IMR-90 (cell line): ENCODE measurements at regions of chr2 and their contacts with region 1.

Region 1: DNA sequence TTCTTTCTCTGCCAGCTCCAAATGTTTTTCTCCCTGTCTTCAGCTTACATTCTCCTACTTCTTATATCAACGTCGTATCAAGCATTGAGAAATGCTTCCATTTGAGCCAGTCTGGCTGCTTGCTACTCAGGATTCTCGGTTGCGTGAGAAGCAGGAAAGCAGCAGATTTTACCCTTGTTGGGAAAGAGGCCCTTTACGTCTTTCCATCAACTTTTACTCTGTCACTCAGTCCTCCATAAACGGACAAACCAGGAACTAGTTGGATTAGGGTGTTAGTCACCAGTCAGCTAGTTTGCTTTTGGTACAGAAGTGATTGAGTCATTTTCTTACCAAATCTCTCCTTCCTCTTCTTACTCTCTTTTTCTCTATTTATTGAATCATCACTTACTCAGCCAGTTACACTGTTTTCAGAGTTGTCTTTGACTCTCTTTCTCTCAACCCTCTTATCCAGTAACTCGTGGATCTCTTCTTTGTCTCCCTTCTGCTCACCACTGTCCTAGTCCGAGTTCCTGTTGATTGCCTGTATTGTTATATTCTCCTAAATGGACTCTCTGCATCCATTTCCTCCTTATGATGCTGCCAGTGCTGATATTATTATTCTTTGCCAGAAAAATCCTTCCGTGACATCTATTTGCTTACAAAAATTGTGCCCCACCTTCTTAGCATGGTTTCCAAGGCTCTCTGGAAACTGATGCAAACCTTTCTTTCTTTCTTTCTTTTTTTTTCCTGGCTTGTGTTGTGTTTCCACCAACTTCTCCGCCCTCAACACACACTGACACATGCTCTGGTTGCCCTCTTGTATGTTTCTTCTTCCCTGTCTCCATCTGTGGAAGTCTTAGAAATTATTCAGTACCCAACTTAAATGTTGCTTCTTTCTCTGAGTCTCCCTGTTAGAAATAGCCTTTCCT is 61.5 kb downstream of the VRK2 start:
- DNase-seq: peak; percentile 97
- ATAC-seq: peak; percentile 90
- H3K4me3 ChIP-seq: peak overlapping the region; percentile 22; the same call in 1 of the 2 replicates
- H3K27ac ChIP-seq: peak overlapping the region; percentile 96
- H3K4me1 ChIP-seq: peaks cover 7% of the 10 kb centered on the region
- H3K27me3 ChIP-seq: no peaks in the 10 kb centered on the region
- CTCF ChIP-seq: no peak
- POLR2A ChIP-seq: no peak; the same call in 1 of the 2 replicates
- RAD21 ChIP-seq: no peak

Region 2: DNA sequence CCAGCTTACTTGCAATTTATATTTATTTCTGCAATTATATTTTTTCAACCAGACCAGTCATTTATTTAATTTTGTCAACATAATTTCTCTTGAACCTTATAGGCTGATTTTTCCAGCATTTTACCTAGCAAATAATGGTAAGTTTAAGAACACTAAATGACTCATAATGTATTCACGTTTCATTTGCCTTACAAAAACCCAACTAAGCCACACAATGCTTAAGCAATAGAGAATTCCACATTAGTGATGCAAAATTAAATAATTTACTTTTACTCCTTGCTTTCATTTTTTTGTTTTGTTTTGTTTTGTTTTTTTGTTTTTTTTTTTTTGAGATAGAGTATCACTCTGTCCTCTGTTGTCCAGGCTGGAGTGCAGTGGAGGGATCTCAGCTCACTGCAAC is 171.8 kb before region 1 on chr2:
- CTCF ChIA-PET with region 1: no interaction called
- POLR2A ChIA-PET with region 1: no interaction called
- dilution Hi-C with region 1: no loop called
- in situ Hi-C with region 1: no loop called
- intact Hi-C with region 1: loop called (anchors 5 kb)
- DNase-seq: peak; percentile 47
- ATAC-seq: peak; percentile 44; the same call in 1 of the 2 replicates
- H3K4me3 ChIP-seq: no peak overlapping the region
- H3K27ac ChIP-seq: no peak overlapping the region
- H3K4me1 ChIP-seq: no peaks in the 10 kb centered on the region
- H3K27me3 ChIP-seq: no peaks in the 10 kb centered on the region
- CTCF ChIP-seq: no peak
- POLR2A ChIP-seq: no peak
- RAD21 ChIP-seq: no peak

Region 3: DNA sequence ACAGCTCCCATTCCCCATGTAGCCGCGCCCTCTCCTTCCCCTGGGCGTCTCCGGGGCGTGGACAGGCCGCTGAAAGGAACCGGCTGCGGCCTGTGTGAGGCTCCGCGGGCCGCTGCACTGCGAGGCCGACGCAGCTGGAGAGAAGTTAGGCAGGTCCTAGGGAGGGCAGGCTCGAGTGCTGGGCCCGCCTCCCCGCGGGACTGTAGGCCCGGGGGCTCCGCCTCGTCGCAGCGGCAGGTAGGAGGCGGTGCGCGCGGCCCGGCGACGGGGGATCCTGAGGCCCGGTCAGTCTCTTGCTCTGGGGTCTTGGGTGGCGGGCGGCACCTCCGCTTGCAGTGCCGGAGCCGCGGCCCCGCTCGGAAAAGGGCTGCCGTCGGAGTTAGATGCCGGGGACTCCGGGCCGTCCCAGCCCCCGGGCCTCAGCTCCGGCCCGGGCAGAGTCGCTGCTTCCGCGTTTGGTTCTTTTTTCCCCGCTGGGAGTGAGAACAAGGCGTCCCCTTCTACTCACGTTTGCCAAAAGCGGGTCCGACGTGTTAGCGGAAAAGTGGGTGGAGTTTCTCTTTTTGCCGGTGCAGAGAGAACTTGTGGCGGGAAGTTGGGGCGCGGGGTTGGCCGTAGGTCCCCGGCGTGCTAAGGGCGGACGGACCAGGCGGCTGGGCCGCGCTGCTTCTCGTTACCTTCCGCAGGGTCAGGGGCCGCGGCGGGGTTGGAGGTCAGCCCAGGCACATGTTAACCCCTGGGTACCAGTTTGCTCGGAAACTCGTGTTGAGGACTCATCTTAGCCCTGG is 61.3 kb before region 1 on chr2 and contains the start of gene VRK2:
- CTCF ChIA-PET with region 1: no interaction called
- POLR2A ChIA-PET with region 1: no interaction called
- dilution Hi-C with region 1: no loop called
- in situ Hi-C with region 1: no loop called
- intact Hi-C with region 1: loop called (anchors 5 kb)
- DNase-seq: peak; percentile 87
- ATAC-seq: peak; percentile 96
- H3K4me3 ChIP-seq: peak within 1 kb of the TSS; percentile 84
- H3K27ac ChIP-seq: peak within 1 kb of the TSS; percentile 86
- H3K4me1 ChIP-seq: peaks cover 2% of the 10 kb centered on the region; the same call in 1 of the 2 replicates
- H3K27me3 ChIP-seq: no peaks in the 10 kb centered on the region
- CTCF ChIP-seq: no peak
- POLR2A ChIP-seq: peak; percentile 56; the same call in 1 of the 2 replicates
- RAD21 ChIP-seq: peak; percentile 15; the same call in 1 of the 2 replicates
- total RNA-seq, gene VRK2: 22.8 and 27.2 TPM in 2 replicates

Region 4: DNA sequence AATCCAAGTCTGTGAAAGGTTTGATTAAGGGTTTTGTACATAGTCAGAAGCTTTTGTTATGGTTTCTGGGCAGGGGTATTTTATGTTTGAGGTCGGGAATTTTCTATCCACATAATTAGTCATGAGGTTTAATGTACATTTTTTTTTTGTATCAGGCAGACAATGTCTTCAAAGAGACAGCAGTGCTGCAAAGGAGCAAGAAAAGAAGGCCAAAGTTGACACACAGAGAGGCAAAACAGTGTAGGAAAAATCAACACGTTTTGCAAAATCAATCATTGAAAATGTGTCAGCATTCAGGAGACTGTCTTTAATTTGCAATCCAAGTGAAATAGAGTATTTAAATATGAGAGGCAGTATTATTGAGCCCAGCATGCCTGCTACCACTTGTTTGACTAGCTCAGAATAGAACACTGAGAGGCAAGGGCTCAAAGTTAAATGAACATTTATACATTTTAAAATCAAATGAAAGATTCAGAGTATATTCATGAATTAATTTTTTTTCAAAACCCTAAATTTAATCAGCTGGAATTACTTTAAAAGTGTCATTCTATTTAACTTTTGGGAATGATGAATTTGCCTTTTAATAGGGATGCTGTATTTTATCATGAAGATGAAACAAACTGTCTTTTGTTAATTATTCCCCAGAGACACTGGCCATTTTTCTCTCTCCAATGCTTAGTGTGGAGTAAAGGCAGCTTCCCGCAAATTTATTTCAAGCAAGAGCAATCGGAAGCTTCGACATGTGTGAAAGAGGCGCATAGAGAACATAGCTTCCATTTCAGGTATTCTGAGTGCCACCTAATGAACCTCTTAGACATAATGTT is 50.1 kb before region 1 on chr2:
- CTCF ChIA-PET with region 1: no interaction called
- POLR2A ChIA-PET with region 1: no interaction called
- dilution Hi-C with region 1: no loop called
- in situ Hi-C with region 1: no loop called
- intact Hi-C with region 1: no loop called
- DNase-seq: no peak
- ATAC-seq: no peak
- H3K4me3 ChIP-seq: no peak overlapping the region
- H3K27ac ChIP-seq: no peak overlapping the region
- H3K4me1 ChIP-seq: no peaks in the 10 kb centered on the region
- H3K27me3 ChIP-seq: no peaks in the 10 kb centered on the region
- CTCF ChIP-seq: no peak
- POLR2A ChIP-seq: no peak
- RAD21 ChIP-seq: no peak